ENCODE measurements at regions of chr2 and their contacts with region 1.

Region 1: DNA sequence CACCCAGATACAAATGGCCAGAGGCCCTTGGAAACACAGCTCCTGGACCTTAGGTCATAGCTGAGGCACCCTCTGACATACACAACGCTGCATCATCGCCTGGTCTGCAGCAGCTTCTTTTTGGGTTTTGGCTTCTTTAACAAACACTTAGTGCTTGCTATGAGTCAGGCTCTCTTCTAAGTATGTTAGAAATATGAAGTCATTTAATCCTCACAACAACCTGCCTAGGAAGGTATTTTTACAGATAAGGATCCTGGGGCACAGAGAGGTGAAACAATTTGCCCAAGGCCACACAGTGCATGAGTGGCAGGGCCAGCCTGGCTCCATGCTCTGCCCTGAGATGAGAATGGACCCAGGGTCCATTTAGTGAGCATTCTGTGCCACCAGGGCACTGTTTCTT is 96.6 kb downstream of the TMEM17 start:
- DNase-seq: no peak
- ATAC-seq: no peak

Region 2: GRCh38 chr2:61922714-61923113 is 486.7 kb before region 1 on chr2:
- intact Hi-C with region 1: loop called (anchors 2 kb)
- DNase-seq: no peak
- ATAC-seq: no peak